ENCODE measurements at regions of chr3 and their contacts with region 1.

Region 1: DNA sequence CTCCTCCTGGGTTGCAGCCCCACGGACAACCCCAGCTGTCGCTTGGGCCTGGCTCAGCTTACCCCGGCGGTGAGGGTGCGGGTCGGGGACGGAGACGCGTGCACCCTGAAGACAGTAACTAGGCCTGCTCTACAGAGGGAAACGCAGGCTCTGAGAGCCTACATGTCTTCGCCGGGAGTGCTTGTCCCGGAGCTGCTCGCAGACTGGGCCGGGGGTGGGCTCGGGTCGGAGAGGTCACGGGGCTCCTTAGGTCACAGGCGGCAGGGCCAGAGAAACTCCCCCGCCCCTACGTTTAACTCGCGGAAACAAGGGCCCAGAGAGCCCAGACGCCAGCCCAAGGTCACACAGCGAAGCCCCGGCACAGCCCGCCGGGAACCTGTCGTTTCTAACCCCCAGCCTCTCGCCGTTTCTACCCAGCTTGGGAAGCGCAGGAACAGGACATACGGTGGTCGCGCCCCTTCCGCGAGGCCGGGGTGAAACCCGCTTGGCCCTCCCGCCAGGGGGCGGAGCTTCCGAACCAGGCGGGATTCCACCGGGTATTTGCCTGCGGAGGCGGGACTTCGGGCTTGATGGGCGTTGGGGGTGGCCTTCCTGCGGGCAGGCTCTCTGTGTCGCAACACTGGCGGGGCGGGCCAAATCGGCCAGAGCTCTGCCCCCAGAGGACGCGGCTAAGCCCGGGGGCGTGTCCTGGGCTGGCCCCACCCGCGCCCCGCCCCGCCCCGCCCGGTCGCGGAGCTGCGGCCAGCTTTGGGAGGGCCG is at the start of gene HDAC11:
- DNase-seq: peak; percentile 99
- ATAC-seq: peak; percentile 96
- H3K4me3 Mint-ChIP-seq: peak within 1 kb of the TSS; percentile 89
- H3K27ac Mint-ChIP-seq: peak within 1 kb of the TSS; percentile 90
- H3K4me1 Mint-ChIP-seq: peaks cover 20% of the 10 kb centered on the region
- H3K27me3 Mint-ChIP-seq: no peaks in the 10 kb centered on the region
- total RNA-seq, gene HDAC11: 3.4 to 4.1 TPM

Region 2: DNA sequence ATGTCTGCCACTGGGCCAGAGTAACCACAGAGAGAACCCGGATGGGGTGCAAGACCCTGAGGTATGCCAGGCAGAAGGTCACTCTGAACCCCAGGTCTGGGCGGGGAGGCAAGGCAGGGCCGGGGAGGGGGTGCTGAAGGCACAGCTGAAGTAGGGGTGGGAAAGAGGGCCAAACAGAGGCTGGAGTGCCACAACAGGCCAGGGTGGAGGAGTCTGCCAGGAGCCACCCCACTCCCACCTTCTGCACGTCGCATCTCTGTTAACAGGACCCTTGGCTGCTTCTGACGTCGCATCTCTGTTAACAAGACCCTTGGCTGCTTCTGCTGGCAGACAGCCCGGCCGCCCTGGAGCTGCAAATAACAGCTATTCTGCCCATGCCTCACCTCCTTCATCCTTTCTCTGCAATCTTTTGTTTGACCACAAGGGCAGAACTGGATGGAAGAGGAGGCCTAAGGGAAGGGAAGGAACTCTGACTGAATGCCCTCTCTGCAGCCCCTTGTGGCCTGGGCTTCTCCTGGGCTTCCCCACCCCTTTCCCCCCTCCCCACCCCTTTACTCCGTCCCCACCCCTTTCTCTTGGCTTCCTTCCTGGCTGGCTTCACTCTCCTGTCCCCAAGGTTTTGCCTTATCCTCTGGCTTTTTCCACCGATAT is 48.6 kb after region 1 on chr3:
- CTCF ChIA-PET with region 1: no interaction called
- POLR2A ChIA-PET with region 1: no interaction called
- intact Hi-C with region 1: no loop called
- DNase-seq: no peak
- ATAC-seq: no peak
- H3K4me3 Mint-ChIP-seq: no peak overlapping the region
- H3K27ac Mint-ChIP-seq: no peak overlapping the region
- H3K4me1 Mint-ChIP-seq: no peaks in the 10 kb centered on the region
- H3K27me3 Mint-ChIP-seq: no peaks in the 10 kb centered on the region

Region 3: DNA sequence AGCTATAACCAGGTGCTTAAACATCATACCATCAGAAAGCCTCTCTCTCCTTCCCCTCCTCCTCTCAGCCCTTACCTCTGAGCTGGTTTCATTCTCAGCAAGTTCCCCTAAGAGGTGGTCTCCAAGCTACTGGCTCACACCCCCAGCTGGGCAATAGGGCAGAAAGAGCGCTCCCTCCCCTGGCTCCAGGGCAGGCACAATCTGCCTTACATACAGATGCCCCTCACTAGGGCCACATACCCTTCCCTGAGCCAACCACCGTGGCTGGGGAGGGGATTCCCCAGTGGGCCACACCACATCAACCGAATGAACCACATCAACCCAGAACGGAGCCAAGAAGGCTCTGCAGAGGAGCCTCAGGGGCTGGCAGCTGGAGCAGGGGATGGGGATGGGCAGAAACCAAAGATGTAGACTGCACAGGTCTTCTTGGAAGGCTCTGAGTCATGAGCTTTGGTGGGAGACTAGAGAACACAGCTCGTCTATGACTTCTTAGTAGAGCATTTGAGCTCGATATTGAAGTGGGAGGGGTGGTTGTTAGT is 64.6 kb after region 1 on chr3:
- CTCF ChIA-PET with region 1: no interaction called
- POLR2A ChIA-PET with region 1: no interaction called
- intact Hi-C with region 1: loop called in 1 of 2 experiments (anchors 2 kb)
- DNase-seq: peak; percentile 80
- ATAC-seq: peak; percentile 96
- H3K4me3 Mint-ChIP-seq: no peak overlapping the region
- H3K27ac Mint-ChIP-seq: no peak overlapping the region
- H3K4me1 Mint-ChIP-seq: peaks cover 17% of the 10 kb centered on the region
- H3K27me3 Mint-ChIP-seq: peaks cover 22% of the 10 kb centered on the region

Region 4: DNA sequence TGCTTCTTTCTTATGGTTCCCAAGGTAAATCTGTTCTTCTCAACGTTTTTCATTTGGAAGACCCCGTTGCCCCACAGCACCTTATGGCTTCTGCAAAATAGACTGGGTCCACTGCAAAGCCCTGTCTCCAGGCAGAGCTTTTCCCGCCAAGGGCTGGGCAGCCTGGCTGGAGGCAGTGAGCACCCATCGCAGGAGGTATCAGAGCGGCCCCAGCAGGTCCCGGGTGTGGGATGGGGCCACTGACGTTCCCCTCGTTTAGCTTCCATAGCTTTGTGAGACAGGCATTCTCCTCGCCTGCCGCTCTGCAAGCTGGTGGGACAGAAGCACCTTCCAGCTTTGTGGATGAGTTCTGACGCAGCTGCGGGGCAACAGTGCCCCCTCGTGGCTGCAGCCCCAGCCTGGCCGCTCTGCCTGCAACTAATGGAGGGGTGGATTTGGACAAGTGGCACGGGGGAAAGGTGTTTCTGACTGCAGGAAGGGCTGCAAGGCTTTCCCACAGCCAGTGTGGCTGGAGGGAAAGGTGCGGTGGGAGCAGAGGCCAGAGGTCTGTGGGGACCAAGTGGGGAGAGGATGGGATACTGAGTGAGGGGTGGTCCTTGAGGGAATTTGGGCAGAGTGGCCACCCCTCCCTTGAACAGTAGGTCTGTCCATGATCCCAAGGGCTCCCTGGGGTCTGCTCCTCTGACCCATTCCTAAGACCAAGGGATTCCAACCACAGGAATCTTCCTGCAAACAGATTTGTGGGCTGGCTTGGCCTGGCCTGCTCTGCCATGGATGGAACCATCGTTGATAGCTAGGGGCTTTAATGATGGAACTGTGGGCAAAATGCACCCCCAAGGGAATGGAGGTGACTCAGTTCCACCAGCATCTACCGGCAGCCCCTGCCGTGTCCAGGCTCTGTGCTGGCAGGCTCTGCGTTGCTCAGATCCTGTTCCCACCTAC is 168.6 kb after region 1 on chr3:
- CTCF ChIA-PET with region 1: interaction called, 4 read pairs
- POLR2A ChIA-PET with region 1: no interaction called
- intact Hi-C with region 1: loop called in 1 of 2 experiments (anchors 1 kb)
- DNase-seq: peak; percentile 87
- ATAC-seq: peak; percentile 63
- H3K4me3 Mint-ChIP-seq: no peak overlapping the region
- H3K27ac Mint-ChIP-seq: no peak overlapping the region
- H3K4me1 Mint-ChIP-seq: peaks cover 18% of the 10 kb centered on the region
- H3K27me3 Mint-ChIP-seq: peaks cover 14% of the 10 kb centered on the region

Region 5: GRCh38 chr3:13879655-13880204 is 400.0 kb after region 1 on chr3 and contains the start of gene WNT7A:
- CTCF ChIA-PET with region 1: interaction called, 3 read pairs
- POLR2A ChIA-PET with region 1: no interaction called
- intact Hi-C with region 1: loop called in 1 of 2 experiments (anchors 5 kb)
- DNase-seq: peak; percentile 60
- ATAC-seq: peak; percentile 35
- H3K4me3 Mint-ChIP-seq: peak within 1 kb of the TSS; percentile 65
- H3K27ac Mint-ChIP-seq: no peak within 1 kb of the TSS
- H3K4me1 Mint-ChIP-seq: peaks cover 5% of the 10 kb centered on the region
- H3K27me3 Mint-ChIP-seq: peaks cover 11% of the 10 kb centered on the region
- total RNA-seq, gene WNT7A: 0.11 to 0.39 TPM

Measured in activated CD4-positive, alpha-beta T cell treated with anti-CD3 and anti-CD28 coated beads for 36 hours (primary cell).